Common myeloid progenitor, CD34-positive (primary cell): ENCODE measurements at regions of chr19 and their contacts with region 1.

Region 1: GRCh38 chr19:10279737-10280442 is 6.9 kb upstream of the ICAM4 start:
- DNase-seq: peak in 1 of 3 donors; percentile 43
- H3K4me3 ChIP-seq: no peak overlapping the region
- H3K27ac ChIP-seq: no peak overlapping the region
- H3K4me1 ChIP-seq: peaks cover 5 to 17% (median 13%) of the 10 kb centered on the region in 4 experiments
- H3K27me3 ChIP-seq: no peaks in the 10 kb centered on the region

Region 2: DNA sequence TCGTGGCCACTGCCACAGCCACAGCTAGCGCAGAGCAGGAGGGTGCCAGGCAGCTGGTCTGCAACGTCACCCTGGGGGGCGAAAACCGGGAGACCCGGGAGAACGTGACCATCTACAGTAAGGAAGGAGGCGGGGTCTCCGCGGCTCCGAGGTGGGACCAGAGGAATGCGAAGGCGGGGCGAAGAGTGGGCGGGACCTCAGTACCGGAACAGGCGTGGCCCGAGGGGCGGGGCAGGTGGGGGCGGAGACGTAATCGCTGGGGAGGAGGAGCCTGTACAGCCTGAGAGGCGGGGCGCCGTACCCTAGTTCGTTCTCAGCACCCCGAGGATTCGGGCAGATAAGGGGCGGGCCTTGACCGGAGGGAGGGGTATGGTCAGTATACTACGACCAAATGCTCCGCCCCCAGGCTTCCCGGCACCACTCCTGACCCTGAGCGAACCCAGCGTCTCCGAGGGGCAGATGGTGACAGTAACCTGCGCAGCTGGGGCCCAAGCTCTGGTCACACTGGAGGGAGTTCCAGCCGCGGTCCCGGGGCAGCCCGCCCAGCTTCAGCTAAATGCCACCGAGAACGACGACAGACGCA is 12.4 kb after region 1 on chr19:
- CTCF ChIA-PET with region 1: interaction called, 20 read pairs
- POLR2A ChIA-PET with region 1: interaction called, 7 read pairs
- DNase-seq: peak; percentile 72 to 75 (median 75)
- H3K4me3 ChIP-seq: peak overlapping the region; percentile 2 to 76 (median 54)
- H3K27ac ChIP-seq: peak overlapping the region in 1 of 2 experiments; percentile 54
- H3K4me1 ChIP-seq: peaks cover 5 to 91% (median 83%) of the 10 kb centered on the region in 4 experiments
- H3K27me3 ChIP-seq: peaks cover 0 to 70% (median 52%) of the 10 kb centered on the region in 5 experiments